ENCODE measurements at regions of chr14 and their contacts with region 1.

Region 1: DNA sequence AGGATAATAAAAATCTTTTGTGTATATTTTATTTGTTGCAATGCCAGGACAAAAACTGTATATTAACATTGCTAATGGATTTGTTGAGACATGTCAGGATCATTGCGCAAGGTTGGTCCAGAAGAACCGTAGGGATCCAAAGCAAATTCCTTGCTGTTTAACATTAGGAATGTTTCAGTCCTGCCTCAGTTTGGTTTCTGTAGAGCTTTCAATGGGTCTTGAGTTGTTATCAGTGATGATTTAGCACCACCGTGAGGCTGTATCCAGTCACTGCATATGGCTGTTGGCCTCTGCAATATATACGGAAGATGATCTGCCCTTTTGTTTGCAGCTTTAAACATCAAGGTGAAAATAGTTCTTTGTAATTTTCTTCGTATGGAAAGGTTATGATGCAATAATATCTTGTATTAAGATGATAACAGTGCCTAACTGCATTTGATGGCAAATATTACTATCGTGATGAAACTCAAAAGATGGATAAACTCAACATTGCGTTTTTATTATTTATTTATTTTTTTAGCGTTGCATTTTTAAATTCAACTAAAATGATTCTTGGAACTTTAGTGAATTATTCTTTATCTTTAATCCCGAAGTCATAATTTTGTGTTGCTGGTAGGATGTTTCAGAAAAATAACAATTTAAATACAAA is 231.2 kb downstream of the AKAP6 start:
- DNase-seq: peak; percentile 51
- ATAC-seq: peak; percentile 91
- H3K4me3 Mint-ChIP-seq: no peak overlapping the region
- H3K27ac Mint-ChIP-seq: no peak overlapping the region
- H3K4me1 Mint-ChIP-seq: no peaks in the 10 kb centered on the region
- H3K27me3 Mint-ChIP-seq: no peaks in the 10 kb centered on the region
- CTCF ChIP-seq: peak; percentile 66

Region 2: DNA sequence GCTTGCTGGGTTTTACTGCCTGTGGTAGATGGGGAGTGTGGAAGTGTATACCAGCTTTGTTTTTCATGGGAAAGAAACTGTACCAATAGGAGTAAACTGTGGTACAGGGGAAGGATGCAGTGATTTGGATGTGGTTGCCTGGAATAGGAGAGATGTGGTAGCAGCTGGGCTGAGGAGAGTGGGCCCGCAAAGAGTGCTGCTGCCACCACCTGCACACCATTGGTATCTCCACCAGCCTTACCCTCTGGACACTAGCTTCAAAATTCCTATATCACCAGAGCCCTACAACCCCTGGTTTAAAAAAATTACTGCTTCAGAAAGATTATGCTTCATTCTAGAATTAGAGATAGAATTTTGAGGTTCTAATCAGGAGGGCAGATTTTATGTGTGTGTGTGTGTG is 177.6 kb before region 1 on chr14:
- CTCF ChIA-PET with region 1: interaction called, 10 read pairs
- POLR2A ChIA-PET with region 1: no interaction called
- DNase-seq: peak; percentile 27
- ATAC-seq: peak; percentile 92
- H3K4me3 Mint-ChIP-seq: no peak overlapping the region
- H3K27ac Mint-ChIP-seq: no peak overlapping the region
- H3K4me1 Mint-ChIP-seq: peaks cover 7% of the 10 kb centered on the region
- H3K27me3 Mint-ChIP-seq: no peaks in the 10 kb centered on the region
- CTCF ChIP-seq: no peak

Region 3: GRCh38 chr14:32545095-32545494 is 15.2 kb before region 1 on chr14:
- CTCF ChIA-PET with region 1: interaction called, 12 read pairs
- POLR2A ChIA-PET with region 1: no interaction called
- DNase-seq: no peak
- ATAC-seq: no peak
- H3K4me3 Mint-ChIP-seq: no peak overlapping the region
- H3K27ac Mint-ChIP-seq: no peak overlapping the region
- H3K4me1 Mint-ChIP-seq: no peaks in the 10 kb centered on the region
- H3K27me3 Mint-ChIP-seq: no peaks in the 10 kb centered on the region
- CTCF ChIP-seq: no peak

Region 4: DNA sequence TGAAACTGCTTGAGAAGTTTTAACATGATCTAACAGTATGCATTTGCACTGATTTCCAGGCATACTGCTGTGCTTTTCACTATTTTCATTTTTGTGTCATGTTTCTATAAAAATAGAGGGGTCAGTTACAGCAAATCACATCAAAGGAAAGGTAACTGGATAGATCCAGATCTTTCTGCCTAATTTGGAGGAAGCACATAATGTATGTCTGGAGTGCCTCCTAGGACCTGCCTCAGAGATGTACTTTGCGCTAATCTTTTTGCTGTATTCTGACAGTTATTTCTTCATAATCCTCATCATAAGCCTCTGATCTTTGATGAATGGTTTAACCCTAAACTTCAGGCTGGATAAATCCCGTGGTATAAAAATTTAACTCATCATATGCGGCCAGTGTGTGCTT is 267.2 kb after region 1 on chr14:
- CTCF ChIA-PET with region 1: no interaction called
- POLR2A ChIA-PET with region 1: no interaction called
- DNase-seq: no peak
- ATAC-seq: no peak
- H3K4me3 Mint-ChIP-seq: no peak overlapping the region
- H3K27ac Mint-ChIP-seq: no peak overlapping the region
- H3K4me1 Mint-ChIP-seq: peaks cover 11% of the 10 kb centered on the region
- H3K27me3 Mint-ChIP-seq: no peaks in the 10 kb centered on the region
- CTCF ChIP-seq: no peak

Measured in WTC11 (cell line).